ENCODE measurements at regions of chr1 and their contacts with region 1.

Region 1: GRCh38 chr1:217630711-217631591 is at the starts of genes GPATCH2 and SPATA17:
- DNase-seq: peak; percentile 89
- ATAC-seq: peak; percentile 90
- H3K4me3 ChIP-seq: peak within 1 kb of the TSS; percentile 83
- H3K27ac ChIP-seq: peak within 1 kb of the TSS; percentile 82
- H3K4me1 ChIP-seq: peaks cover 33% of the 10 kb centered on the region
- H3K27me3 ChIP-seq: no peaks in the 10 kb centered on the region
- CTCF ChIP-seq: 0 out of 2 replicates have a peak, but pooled peaks have one; percentile 13
- total RNA-seq, gene GPATCH2: 11.9 and 17.2 TPM in 2 replicates
- total RNA-seq, gene SPATA17: 3.3 and 3.8 TPM in 2 replicates

Region 2: DNA sequence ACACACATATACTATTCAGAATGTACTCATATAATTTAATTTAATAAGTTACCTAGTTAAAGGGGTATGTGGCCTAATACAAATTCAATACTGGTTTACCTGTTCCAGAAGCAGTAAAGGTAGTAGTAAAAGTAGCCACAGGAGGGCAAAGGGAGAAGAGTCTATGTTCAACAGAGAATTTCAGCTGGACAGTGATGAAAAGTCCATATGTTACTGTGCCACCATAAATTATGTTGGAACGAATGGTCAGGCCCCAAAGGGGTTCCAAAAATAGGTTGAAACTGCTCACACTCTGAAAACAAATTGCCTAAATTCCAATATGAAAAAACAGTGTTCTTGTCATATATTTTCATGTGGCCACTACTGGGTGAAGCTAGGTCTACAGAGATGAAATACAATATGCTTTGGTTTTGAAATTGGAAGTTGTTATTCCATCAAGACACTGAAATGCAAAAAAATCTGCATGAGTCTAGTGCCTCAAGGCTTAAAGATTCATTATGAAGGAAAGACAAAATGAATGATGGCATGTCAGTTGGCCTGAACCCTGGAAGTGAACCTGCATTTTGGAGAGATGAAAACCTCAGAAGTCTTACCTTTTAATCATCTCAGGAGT is 78.5 kb before region 1 on chr1:
- CTCF ChIA-PET with region 1: no interaction called
- POLR2A ChIA-PET with region 1: no interaction called
- intact Hi-C with region 1: no loop called
- DNase-seq: no peak
- ATAC-seq: no peak
- H3K4me3 ChIP-seq: no peak overlapping the region
- H3K27ac ChIP-seq: no peak overlapping the region
- H3K4me1 ChIP-seq: peaks cover 5% of the 10 kb centered on the region
- H3K27me3 ChIP-seq: no peaks in the 10 kb centered on the region
- CTCF ChIP-seq: 0 out of 2 replicates have a peak, but pooled peaks have one; percentile 23

Region 3: DNA sequence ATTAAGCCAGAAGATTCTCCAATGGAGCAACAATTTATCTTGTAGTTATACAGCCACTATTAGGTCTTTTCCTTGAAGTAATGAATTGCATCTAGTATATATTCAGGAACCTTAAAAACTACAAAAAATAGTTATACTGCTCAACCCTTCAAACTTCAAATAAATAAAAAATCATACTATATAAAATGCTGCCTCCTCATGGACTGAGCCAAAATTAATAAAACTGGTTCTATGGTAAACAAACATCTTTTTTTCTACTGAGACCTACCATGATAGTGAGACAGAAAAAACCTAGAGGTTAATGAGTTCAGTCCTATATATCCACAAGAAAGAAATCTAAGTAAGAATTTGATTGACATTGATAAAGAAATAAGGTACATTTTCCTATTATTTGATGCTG is 67.8 kb before region 1 on chr1:
- CTCF ChIA-PET with region 1: no interaction called
- POLR2A ChIA-PET with region 1: no interaction called
- intact Hi-C with region 1: no loop called
- DNase-seq: peak; percentile 52
- ATAC-seq: peak; percentile 38
- H3K4me3 ChIP-seq: peak overlapping the region; percentile 52
- H3K27ac ChIP-seq: peak overlapping the region; percentile 71
- H3K4me1 ChIP-seq: peaks cover 28% of the 10 kb centered on the region
- H3K27me3 ChIP-seq: no peaks in the 10 kb centered on the region
- CTCF ChIP-seq: peak; percentile 62; the same call in 1 of the 2 replicates

Region 4: GRCh38 chr1:217660353-217661062 is 29.6 kb after region 1 on chr1:
- CTCF ChIA-PET with region 1: no interaction called
- POLR2A ChIA-PET with region 1: interaction called, 9 read pairs
- intact Hi-C with region 1: loop called (anchors 2 kb)
- DNase-seq: peak; percentile 98
- ATAC-seq: peak; percentile 93
- H3K4me3 ChIP-seq: peak overlapping the region; percentile 48; the same call in 1 of the 2 replicates
- H3K27ac ChIP-seq: peak overlapping the region; percentile 86
- H3K4me1 ChIP-seq: peaks cover 24% of the 10 kb centered on the region
- H3K27me3 ChIP-seq: no peaks in the 10 kb centered on the region
- CTCF ChIP-seq: peak; percentile 83

Region 5: DNA sequence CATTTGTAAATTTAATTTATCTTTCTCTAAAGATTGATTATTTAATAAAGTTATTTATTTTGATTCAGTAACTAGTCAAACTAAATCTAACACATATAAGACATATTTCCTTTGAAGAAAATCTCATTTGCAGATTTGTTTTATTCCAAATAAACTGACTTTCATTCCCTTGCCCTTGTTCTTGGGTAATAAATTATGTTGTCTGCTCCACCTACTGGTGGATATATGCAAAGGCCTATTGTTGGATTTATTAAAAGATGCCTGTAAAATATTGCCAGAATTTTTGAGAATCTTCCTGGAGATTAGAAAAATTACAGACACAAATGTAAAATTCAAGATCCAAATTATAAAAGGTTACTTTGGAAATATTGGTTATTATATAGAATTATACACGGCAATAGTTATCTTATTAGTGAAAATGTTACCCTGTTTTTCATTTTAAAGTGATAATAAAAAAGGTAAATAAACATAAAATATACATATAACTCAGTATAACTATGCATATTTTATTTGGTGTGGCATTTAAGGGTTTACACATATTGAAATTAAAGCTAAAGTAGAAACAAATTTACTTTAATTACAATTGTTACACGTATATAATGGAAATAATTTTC is 116.3 kb after region 1 on chr1:
- CTCF ChIA-PET with region 1: no interaction called
- POLR2A ChIA-PET with region 1: no interaction called
- intact Hi-C with region 1: loop called (anchors 5 kb)
- DNase-seq: peak; percentile 75
- ATAC-seq: no peak; the same call in 1 of the 2 replicates
- H3K4me3 ChIP-seq: no peak overlapping the region
- H3K27ac ChIP-seq: no peak overlapping the region
- H3K4me1 ChIP-seq: no peaks in the 10 kb centered on the region
- H3K27me3 ChIP-seq: no peaks in the 10 kb centered on the region
- CTCF ChIP-seq: peak; percentile 89

Measured in PC-3 (cell line).